H1 (cell line): ENCODE measurements at regions of chr7 and their contacts with region 1.

Region 1: GRCh38 chr7:22255834-22256233 is 101.1 kb downstream of the RAPGEF5 start:
- DNase-seq: no peak
- H3K4me3 ChIP-seq: no peak overlapping the region
- H3K27ac ChIP-seq: no peak overlapping the region
- H3K4me1 ChIP-seq: peaks cover 2 to 20% (median 12%) of the 10 kb centered on the region in 4 experiments; a peak in 6 of 7 replicates
- H3K27me3 ChIP-seq: no peaks in the 10 kb centered on the region
- CTCF ChIP-seq: peak in 1 of 3 experiments; percentile 12; a peak in 1 of 4 replicates
- EP300 ChIP-seq: no peak
- POLR2A ChIP-seq: no peak
- RAD21 ChIP-seq: peak in 1 of 2 experiments; percentile 15; a peak in 1 of 4 replicates

Region 2: GRCh38 chr7:22137466-22137865 is 118.4 kb before region 1 on chr7:
- CTCF ChIA-PET with region 1: interaction called, 10 read pairs
- POLR2A ChIA-PET with region 1: no interaction called
- DNase-seq: no peak
- H3K4me3 ChIP-seq: no peak overlapping the region
- H3K27ac ChIP-seq: no peak overlapping the region
- H3K4me1 ChIP-seq: peaks cover 4 to 12% (median 7%) of the 10 kb centered on the region in 4 experiments
- H3K27me3 ChIP-seq: no peaks in the 10 kb centered on the region
- CTCF ChIP-seq: no peak
- EP300 ChIP-seq: no peak
- POLR2A ChIP-seq: no peak
- RAD21 ChIP-seq: no peak

Region 3: GRCh38 chr7:22202141-22202540 is 53.7 kb before region 1 on chr7:
- CTCF ChIA-PET with region 1: interaction called, 12 read pairs
- POLR2A ChIA-PET with region 1: no interaction called
- DNase-seq: no peak
- H3K4me3 ChIP-seq: no peak overlapping the region
- H3K27ac ChIP-seq: no peak overlapping the region
- H3K4me1 ChIP-seq: no peaks in the 10 kb centered on the region
- H3K27me3 ChIP-seq: no peaks in the 10 kb centered on the region
- CTCF ChIP-seq: no peak
- EP300 ChIP-seq: no peak
- POLR2A ChIP-seq: no peak
- RAD21 ChIP-seq: no peak

Region 4: GRCh38 chr7:22219036-22219435 is 36.8 kb before region 1 on chr7:
- CTCF ChIA-PET with region 1: no interaction called
- POLR2A ChIA-PET with region 1: no interaction called
- DNase-seq: no peak
- H3K4me3 ChIP-seq: no peak overlapping the region
- H3K27ac ChIP-seq: no peak overlapping the region
- H3K4me1 ChIP-seq: peaks cover 0 to 2% (median 0%) of the 10 kb centered on the region in 4 experiments; a peak in 2 of 7 replicates
- H3K27me3 ChIP-seq: no peaks in the 10 kb centered on the region
- CTCF ChIP-seq: no peak
- EP300 ChIP-seq: no peak
- POLR2A ChIP-seq: no peak
- RAD21 ChIP-seq: no peak

Region 5: DNA sequence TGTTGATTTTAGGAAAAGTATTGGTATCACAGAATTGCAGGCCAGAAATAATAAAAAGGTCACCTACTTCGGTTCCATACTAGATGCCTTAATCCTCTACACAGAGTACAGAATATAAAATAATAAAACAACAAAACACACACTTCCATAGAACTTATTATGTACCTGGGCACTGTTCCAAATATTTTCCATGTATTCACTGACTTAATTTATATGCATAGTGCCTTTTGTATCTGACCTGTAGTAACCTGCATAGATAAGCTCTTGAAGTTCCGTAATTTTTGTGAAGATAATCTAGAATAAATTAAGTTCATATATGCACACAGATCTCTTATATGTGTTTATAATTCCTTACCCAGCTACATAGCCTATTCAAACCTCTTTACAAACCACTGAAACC is 22.8 kb after region 1 on chr7:
- CTCF ChIA-PET with region 1: no interaction called
- POLR2A ChIA-PET with region 1: no interaction called
- DNase-seq: no peak
- H3K4me3 ChIP-seq: no peak overlapping the region
- H3K27ac ChIP-seq: no peak overlapping the region
- H3K4me1 ChIP-seq: no peaks in the 10 kb centered on the region
- H3K27me3 ChIP-seq: no peaks in the 10 kb centered on the region
- CTCF ChIP-seq: no peak
- EP300 ChIP-seq: no peak
- POLR2A ChIP-seq: no peak
- RAD21 ChIP-seq: no peak

Region 6: GRCh38 chr7:22319424-22320403 is 63.9 kb after region 1 on chr7:
- CTCF ChIA-PET with region 1: no interaction called
- POLR2A ChIA-PET with region 1: no interaction called
- DNase-seq: no peak
- H3K4me3 ChIP-seq: no peak overlapping the region
- H3K27ac ChIP-seq: no peak overlapping the region
- H3K4me1 ChIP-seq: peaks cover 3 to 13% (median 8%) of the 10 kb centered on the region in 4 experiments; a peak in 4 of 7 replicates
- H3K27me3 ChIP-seq: no peaks in the 10 kb centered on the region
- CTCF ChIP-seq: no peak
- EP300 ChIP-seq: no peak
- POLR2A ChIP-seq: no peak
- RAD21 ChIP-seq: no peak